ENCODE measurements at regions of chr7 and their contacts with region 1.

Region 1: DNA sequence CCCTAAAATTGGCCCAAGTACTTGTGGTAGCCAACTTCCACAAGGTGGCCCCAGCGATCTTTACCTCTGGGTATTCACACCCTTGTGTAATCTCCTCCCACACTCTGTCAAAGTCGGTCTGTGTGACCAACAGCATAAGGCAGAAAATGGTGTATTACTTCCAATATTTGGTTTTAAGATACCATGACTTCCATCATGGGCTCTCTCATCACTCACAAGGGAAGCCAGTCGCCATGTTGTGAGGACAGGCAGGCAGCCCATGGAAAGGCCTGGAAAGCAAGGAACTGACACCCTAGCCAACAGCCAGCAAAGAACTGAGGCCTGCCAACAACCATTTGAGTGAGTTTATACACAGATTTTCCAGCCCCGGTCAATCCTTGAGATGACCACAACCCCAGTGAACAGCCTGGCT is 91.0 kb upstream of the KMT2E start:
- DNase-seq: peak; percentile 68
- CTCF ChIP-seq: peak; percentile 76

Region 2: DNA sequence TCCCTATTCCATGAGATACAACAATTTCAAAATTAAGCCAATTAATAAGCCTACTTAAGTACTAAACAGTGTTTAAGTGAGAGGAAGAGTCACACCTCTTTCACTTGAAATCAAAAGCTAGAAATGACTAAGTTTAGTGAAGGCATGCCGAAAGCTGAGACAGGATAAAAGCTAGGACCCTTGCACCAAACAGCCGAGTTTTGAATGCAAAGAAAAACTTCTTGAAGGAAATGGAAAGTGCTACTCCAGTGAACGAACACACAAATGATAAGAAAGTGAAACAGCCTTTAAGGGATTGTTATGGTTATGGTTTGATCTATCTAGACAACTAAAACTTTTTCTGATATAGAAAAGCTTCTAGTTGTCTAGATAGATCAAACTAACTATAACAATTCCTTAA is 44.4 kb before region 1 on chr7:
- CTCF ChIA-PET with region 1: interaction called, 216 read pairs
- POLR2A ChIA-PET with region 1: interaction called, 4 read pairs
- DNase-seq: no peak
- CTCF ChIP-seq: no peak

Region 3: GRCh38 chr7:104895522-104896236 is 27.3 kb before region 1 on chr7:
- CTCF ChIA-PET with region 1: interaction called, 216 read pairs
- POLR2A ChIA-PET with region 1: no interaction called
- DNase-seq: no peak
- CTCF ChIP-seq: no peak

Region 4: DNA sequence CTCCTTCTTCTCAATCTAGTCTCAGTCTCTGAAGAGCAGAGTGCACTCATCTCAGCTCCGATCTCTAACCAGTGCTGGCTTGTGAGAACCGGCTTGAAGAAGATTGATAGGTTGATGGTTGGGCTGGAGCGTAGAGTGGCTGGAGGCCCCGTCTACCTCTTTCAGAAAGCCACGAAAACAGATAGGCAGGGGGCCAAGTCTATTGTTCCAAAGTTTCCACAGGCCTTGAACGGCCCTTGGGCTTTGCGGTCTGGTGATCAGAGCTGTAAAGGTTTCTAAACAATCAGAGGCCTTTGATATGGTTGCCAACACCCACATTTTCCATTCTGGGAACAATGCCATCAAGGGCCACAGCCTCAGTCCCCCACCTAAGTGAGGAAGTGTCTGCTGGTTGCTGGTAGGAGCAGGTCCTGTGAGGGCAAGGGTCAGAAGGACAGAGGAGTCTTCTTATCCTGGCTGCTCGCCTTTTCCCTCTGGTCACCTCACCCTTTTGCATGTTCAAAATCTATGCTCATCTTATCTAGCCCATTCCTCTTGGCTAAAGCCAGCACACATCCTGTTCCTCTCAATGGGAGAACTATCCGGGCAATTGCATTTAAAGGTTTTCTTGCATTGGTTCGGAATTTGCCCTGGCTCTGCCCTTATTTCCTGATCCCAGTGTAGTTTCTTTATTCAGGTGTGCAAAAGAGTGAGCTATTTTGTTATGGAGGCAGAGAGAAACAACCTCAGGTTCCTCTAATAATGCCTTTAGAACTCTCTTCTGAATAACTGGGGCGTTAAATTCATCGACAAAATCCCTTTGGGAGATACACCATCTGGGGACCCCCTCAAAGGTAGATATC is 20.7 kb after region 1 on chr7:
- CTCF ChIA-PET with region 1: interaction called, 7 read pairs
- POLR2A ChIA-PET with region 1: interaction called, 23 read pairs
- DNase-seq: peak; percentile 52
- CTCF ChIP-seq: no peak

Region 5: DNA sequence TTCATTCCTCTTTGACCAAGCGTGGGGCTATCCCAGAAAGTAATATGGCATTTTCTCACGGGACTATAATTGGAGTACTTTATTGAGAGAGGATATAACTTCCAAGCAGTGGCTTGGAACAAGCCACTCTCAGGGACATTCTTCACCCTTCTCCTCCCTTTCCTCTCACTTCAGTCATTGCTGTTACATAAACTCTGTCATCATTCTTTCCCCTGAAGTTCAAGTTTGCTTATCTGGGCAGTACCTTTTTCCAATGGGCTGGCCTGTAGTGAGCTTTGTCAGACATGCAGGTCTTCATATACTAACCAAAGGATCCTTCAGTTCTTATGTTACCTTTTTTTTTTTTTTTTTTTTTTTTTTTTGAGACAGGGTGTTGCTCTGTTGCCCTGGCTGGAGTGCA is 32.3 kb after region 1 on chr7:
- CTCF ChIA-PET with region 1: no interaction called
- POLR2A ChIA-PET with region 1: no interaction called
- DNase-seq: no peak
- CTCF ChIP-seq: no peak

Region 6: DNA sequence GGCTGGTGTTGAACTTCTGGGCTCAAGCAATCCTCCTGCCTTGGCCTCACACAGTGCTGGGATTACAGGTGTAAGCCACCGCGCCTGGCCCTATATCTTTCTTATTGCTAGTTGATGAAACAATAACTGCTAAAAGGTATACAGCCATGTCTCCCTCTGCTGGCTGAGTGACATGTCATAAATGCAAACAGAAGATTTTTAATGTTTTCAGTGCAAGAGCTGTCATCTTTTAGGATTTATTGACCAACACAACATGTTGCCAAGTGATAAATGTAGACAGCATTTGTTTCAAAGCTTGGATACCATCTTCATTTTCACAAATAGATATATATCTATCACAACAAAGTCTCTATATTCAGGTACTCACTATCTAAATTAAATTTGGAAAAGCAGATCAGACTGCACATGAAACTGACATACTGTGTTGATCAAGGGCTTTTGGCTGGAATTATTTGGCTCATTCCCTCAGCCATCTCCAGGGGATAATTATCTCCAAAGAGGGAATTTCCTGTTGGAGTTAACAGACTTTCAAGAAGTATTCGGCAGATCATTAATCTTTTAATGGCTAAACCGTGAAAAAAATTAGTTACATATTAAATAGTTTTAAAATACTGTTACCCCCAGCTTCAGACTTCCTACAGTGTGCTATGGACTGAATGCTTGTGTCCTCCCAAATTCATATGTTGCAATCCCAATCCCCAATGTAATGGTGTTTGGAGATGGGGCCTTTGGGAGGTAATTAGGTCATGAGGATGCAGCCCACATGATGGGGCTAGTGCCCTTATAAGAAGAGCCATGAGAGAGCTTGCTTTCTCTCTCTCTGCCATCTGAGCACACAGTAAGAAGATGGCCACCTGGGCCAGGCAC is 507.0 kb after region 1 on chr7:
- CTCF ChIA-PET with region 1: interaction called, 11 read pairs
- POLR2A ChIA-PET with region 1: no interaction called
- DNase-seq: peak; percentile 52
- CTCF ChIP-seq: peak; percentile 68